Head of caudate nucleus (tissue), 42 donors: ENCODE measurements at regions of chr6 and their contacts with region 1.

Region 1: DNA sequence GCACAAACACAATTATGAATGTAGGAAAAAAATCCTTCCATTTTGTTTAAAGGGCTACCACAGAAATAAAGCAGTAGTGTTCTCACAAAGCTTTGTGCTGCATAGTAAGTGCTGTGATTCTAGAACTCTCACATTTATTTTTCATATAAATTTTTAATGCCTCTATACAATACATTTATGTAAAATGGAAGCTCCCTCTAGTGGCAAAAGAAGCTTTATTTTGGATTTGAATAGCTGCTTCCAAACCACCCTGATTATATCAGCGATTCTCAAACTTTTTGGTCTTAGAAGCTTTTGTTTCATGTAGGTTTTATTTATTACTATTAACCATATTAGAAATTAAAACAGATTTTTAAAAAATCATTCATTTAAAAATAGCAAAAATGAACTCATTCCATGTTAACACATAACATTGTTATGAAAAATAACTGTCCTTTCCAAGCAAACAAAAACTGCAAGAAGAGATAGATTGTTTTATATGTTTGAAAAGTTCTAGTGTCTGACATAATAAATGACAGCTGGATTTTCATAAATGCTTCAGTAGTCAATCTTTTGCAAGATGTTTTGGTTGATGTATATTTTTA is 38.4 kb downstream of the HS3ST5 start:
- DNase-seq: no peak

Region 2: DNA sequence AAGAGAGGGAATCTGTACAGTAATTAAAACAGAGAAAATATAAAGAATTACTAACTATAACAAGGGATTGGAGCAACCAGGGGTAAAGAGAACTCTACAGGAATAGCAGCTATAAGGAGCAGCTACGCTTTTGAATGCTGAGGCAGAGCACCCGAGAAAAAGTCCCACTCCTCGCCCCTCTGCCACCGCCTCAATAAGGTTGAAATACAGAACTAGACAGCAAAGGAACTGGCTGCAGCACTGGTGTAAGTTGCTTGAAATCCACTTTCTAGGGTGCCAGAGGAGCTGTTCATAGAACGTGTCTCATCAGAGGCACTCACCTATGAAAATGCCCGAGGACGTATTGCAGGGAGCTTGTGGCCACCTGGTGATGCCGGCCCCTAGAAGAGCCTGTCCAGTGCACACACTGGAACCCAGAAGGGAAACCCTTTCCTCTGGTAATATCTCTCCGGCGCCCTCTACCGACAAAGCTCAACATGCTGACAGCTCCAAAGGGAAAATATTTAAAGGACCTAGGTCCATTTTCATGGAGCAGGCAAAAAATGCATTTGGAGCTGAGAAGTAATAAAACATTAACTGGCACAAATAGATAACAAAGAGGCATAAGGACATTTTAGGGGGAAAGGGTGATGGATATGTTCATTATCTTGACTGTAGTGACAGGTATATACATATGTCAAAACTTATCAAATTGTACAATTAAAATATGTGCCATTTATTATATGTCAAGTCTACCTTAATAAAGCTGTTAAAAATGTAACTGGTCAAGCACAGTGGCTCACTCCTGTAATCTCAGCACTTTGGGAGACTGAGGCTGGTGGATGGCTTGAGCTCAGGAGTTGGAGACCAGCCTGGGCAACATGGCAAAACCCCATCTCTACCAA is 196.0 kb before region 1 on chr6:
- intact Hi-C with region 1: loop called (anchors 10 kb)
- DNase-seq: peak; percentile 59 to 95 (median 85)